ENCODE measurements at regions of chr18 and their contacts with region 1.

Region 1: GRCh38 chr18:26268454-26268853 is 42.2 kb downstream of the TAF4B start:
- DNase-seq: no peak
- ATAC-seq: no peak
- H3K4me3 ChIP-seq: no peak overlapping the region
- H3K27ac ChIP-seq: no peak overlapping the region
- H3K4me1 ChIP-seq: no peaks in the 10 kb centered on the region
- H3K27me3 ChIP-seq: no peaks in the 10 kb centered on the region
- CTCF ChIP-seq: no peak

Region 2: GRCh38 chr18:25686960-25687520 is 581.4 kb before region 1 on chr18:
- intact Hi-C with region 1: loop called in 1 of 10 experiments (anchors 10 kb)
- DNase-seq: no peak
- ATAC-seq: no peak
- H3K4me3 ChIP-seq: no peak overlapping the region
- H3K27ac ChIP-seq: no peak overlapping the region
- H3K4me1 ChIP-seq: no peaks in the 10 kb centered on the region
- H3K27me3 ChIP-seq: no peaks in the 10 kb centered on the region
- CTCF ChIP-seq: no peak

Region 3: GRCh38 chr18:26164571-26164970 is 103.9 kb before region 1 on chr18:
- intact Hi-C with region 1: no loop called
- DNase-seq: no peak
- ATAC-seq: no peak
- H3K4me3 ChIP-seq: no peak overlapping the region
- H3K27ac ChIP-seq: no peak overlapping the region
- H3K4me1 ChIP-seq: no peaks in the 10 kb centered on the region
- H3K27me3 ChIP-seq: no peaks in the 10 kb centered on the region
- CTCF ChIP-seq: no peak

Region 4: GRCh38 chr18:26335571-26336487 is 67.4 kb after region 1 on chr18:
- intact Hi-C with region 1: loop called in 1 of 10 experiments (anchors 10 kb)
- DNase-seq: no peak
- ATAC-seq: peak in 3 of 8 donors; percentile 44 to 68 (median 46)
- H3K4me3 ChIP-seq: no peak overlapping the region
- H3K27ac ChIP-seq: peak overlapping the region in 5 of 10 donors; percentile 16 to 56 (median 37)
- H3K4me1 ChIP-seq: peaks cover 0 to 18% (median 5%) of the 10 kb centered on the region in 9 donors
- H3K27me3 ChIP-seq: no peaks in the 10 kb centered on the region
- CTCF ChIP-seq: no peak

Region 5: GRCh38 chr18:26356045-26356785 is 87.8 kb after region 1 on chr18:
- intact Hi-C with region 1: no loop called
- DNase-seq: no peak
- ATAC-seq: no peak
- H3K4me3 ChIP-seq: no peak overlapping the region
- H3K27ac ChIP-seq: no peak overlapping the region
- H3K4me1 ChIP-seq: no peaks in the 10 kb centered on the region
- H3K27me3 ChIP-seq: no peaks in the 10 kb centered on the region
- CTCF ChIP-seq: no peak

Measured in heart right ventricle (tissue), 16 donors.